Dorsolateral prefrontal cortex (tissue), 120 donors: ENCODE measurements at regions of chr1 and their contacts with region 1.

Region 1: GRCh38 chr1:39354572-39354971 is 136.9 kb upstream of the BMP8A start:
- DNase-seq: no peak
- H3K4me3 ChIP-seq: no peak overlapping the region
- H3K27ac ChIP-seq: peak overlapping the region in 13 of 59 donors; percentile 0 to 63 (median 23)
- H3K27me3 ChIP-seq: no peaks in the 10 kb centered on the region
- CTCF ChIP-seq: peak in 48 of 56 donors; percentile 16 to 69 (median 40)

Region 2: DNA sequence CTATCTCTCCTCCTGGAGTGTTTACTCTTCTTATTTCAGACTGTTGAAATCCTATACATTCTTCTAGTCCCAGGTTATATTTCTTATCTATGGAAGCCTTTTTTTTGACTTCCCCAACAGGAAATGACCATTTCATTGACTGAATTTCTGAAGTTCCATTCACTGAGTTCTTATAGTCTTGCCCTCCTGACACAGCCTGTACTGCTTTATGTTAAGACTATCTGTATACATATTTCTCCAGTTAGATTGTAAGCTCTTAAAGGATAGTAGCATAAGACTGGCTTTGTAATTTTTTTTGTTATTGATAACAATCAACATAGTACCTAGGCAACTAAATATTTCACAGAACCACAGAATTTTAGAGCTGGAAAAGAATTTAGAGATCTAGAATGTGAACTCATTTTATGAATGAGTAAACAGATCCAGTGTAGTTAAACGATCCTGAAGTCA is 165.0 kb before region 1 on chr1:
- intact Hi-C with region 1: loop called in 1 of 2 experiments (anchors 5 kb)
- DNase-seq: no peak
- H3K4me3 ChIP-seq: no peak overlapping the region
- H3K27ac ChIP-seq: peak overlapping the region in 20 of 59 donors; percentile 4 to 95 (median 37)
- H3K27me3 ChIP-seq: no peaks in the 10 kb centered on the region
- CTCF ChIP-seq: no peak

Region 3: DNA sequence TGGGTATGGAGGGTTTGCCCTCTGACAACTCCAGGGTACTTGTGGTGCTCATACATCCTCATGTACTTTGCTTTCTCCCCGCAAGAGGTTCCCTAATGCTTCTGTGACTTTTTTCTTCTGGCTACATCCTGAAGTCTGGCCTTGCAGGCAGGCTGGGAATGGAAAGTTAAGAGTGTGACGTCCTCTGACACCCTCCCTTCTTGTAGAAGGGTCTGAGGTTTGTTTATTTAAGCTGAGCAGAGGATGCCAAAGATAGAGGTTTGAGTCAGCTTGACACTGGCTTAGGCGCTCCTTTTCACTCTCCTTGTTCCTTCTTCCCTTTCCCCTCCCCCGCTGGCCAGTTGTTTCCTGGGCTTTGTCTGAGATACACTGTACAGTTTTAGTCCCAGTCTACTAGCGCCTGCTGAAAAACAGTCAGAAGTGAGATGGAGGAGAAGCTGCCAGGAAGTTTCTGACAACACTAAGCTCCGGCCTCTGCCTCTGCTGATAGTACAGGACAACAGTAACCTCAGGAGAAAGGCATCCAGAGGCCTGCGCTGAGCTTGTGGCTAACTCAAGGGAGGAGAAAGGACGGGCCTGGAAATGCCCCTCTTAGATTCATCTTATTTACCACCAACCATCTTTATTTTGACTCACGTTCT is 150.0 kb before region 1 on chr1 and contains the start of gene MACF1:
- intact Hi-C with region 1: no loop called
- DNase-seq: peak in 4 of 10 donors; percentile 50 to 58 (median 52)
- H3K4me3 ChIP-seq: peak within 1 kb of the TSS; percentile 17 to 67 (median 45)
- H3K27ac ChIP-seq: peak within 1 kb of the TSS; percentile 29 to 94 (median 88)
- H3K27me3 ChIP-seq: no peaks in the 10 kb centered on the region
- CTCF ChIP-seq: peak in 22 of 56 donors; percentile 8 to 37 (median 18)
- total RNA-seq, gene MACF1: 403 to 915 (median 551) TPM

Region 4: DNA sequence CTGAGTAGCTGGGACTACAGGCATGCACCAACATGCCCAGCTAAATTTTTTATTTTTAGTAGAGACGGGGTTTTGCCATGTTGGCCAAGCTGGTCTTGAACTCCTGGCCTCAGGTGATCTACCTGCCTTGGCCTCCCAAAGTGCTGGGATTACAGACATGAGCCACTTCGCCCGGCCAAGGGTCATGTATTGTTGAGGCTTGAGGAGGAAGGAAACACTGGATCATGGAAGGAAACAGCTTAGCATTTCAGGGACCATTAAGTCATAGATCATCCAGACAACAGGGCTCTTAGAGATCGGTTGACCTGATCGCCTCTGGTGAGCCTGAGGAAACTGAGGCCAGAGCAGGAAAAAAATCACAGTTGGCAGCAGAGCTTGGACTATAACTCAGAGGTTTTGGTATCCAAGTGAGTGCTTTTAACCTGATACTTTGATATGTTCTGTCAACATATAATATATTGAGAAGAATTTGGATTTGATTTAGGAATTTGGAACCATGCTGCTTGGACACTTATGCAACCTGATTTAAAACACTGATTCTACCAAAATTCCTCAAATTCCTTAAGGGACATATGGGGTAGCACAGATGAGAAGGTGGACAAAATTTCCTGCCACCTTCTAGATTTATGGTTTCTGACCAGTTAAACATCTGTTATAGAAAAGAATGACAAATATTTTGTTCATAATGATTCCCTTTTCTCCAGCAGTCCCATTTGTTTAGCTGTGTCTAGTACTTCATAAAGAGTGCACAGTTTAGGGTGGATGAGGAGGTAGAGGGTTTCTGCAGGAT is 123.7 kb after region 1 on chr1:
- intact Hi-C with region 1: no loop called
- DNase-seq: no peak
- H3K4me3 ChIP-seq: no peak overlapping the region
- H3K27ac ChIP-seq: peak overlapping the region in 1 of 59 donors; percentile 12
- H3K27me3 ChIP-seq: no peaks in the 10 kb centered on the region
- CTCF ChIP-seq: no peak